Left ventricle myocardium inferior (tissue), 1 donor: ENCODE measurements at regions of chr19 and their contacts with region 1.

Region 1: DNA sequence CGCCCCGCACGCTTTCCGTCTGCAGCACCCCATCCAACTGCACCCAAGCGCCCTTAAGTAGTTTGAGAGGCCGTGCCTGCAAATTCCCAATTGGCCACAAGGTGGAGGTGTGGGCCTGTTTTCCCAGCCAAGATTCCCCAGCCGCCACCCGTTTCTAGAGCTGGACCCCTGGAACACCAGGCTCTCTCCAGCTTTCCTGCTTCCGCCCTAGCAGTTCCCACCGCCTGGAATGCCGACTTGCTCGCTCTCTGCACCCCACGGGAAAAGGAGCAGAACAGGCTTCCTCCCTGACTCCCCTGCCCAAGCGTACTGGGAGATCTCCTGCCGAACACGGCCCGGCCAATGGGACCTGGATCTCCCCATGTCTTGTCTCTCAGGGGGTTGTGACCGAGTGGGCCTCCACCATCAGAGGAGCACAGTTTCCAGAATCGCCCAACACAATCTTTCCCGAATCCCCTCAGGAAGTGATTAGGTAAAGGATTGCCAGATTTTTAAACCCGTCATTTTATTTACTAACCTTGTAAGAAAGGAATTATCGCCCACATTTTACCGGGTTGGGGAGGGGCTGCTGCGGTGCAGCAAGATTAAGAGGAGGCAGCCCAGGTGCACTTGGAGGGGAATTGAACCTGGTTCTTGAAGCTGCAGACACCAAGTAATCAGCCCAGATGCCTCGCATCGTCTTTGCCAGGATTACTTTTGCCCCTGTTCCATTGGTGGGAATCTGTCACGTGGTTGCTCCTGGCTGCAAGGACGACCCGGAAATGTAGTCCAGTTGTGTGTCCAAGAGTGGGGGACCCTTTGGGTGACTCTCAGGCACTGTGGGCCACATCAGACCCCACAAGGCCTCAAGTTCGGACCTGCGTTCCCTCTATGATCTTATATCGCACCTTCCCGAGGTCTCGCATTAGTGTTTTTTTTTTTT is 3.5 kb upstream of the NAPSA start:
- DNase-seq: peak; percentile 80
- H3K4me3 ChIP-seq: peak overlapping the region; percentile 86
- H3K27ac ChIP-seq: peak overlapping the region; percentile 89
- H3K4me1 ChIP-seq: peaks cover 16% of the 10 kb centered on the region
- H3K27me3 ChIP-seq: no peaks in the 10 kb centered on the region
- CTCF ChIP-seq: peak; percentile 91

Region 2: DNA sequence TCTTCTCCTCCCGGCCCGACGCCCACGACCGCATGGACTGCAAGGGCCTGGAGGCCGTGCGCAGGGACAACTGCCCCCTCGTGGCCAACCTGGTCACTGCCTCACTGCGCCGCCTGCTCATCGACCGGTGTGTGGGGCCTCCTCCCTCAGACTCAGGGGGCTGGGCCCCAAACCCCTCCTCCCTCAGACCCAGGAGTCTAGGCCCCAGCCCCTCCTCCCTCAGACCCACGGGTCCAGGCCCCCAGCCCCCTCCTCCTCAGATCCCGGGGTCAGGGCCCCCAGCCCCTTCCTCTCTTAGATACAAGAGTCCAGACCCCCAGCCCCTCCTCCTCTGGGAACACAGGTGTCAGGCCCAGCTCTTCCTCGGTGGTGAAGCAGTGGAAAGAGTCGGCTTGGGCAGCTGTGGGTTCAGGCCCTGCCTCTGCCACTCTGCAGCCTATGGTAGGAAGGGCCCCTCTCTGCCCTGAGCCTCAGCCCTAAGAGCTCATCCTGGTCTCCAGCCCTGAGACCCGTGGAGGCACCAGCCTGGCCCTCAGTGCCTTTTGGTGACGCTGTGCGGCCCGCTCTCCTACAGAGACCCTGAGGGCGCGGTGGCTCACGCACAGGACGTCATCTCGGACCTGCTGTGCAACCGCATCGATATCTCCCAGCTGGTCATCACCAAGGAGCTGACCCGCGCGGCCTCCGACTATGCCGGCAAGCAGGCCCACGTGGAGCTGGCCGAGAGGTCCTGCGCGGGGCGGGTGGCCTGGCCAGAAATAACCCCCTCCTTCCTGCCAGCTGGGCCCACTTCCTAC is 46.2 kb after region 1 on chr19:
- intact Hi-C with region 1: loop called (anchors 10 kb)
- DNase-seq: peak; percentile 75
- H3K4me3 ChIP-seq: no peak overlapping the region
- H3K27ac ChIP-seq: no peak overlapping the region
- H3K4me1 ChIP-seq: peaks cover 13% of the 10 kb centered on the region
- H3K27me3 ChIP-seq: peaks cover 33% of the 10 kb centered on the region
- CTCF ChIP-seq: peak; percentile 92

Region 3: GRCh38 chr19:50461066-50461875 is 92.4 kb after region 1 on chr19:
- intact Hi-C with region 1: loop called (anchors 5 kb)
- DNase-seq: peak; percentile 36
- H3K4me3 ChIP-seq: no peak overlapping the region
- H3K27ac ChIP-seq: no peak overlapping the region
- H3K4me1 ChIP-seq: no peaks in the 10 kb centered on the region
- H3K27me3 ChIP-seq: peaks cover 83% of the 10 kb centered on the region
- CTCF ChIP-seq: peak; percentile 85